ENCODE measurements at regions of chr10 and their contacts with region 1.

Region 1: GRCh38 chr10:125982260-125982948 is 86.0 kb downstream of the FANK1 start:
- DNase-seq: no peak
- H3K4me3 ChIP-seq: no peak overlapping the region
- H3K27ac ChIP-seq: no peak overlapping the region
- H3K4me1 ChIP-seq: no peaks in the 10 kb centered on the region
- H3K27me3 ChIP-seq: no peaks in the 10 kb centered on the region
- CTCF ChIP-seq: peak; percentile 59 to 70 (median 60)

Region 2: DNA sequence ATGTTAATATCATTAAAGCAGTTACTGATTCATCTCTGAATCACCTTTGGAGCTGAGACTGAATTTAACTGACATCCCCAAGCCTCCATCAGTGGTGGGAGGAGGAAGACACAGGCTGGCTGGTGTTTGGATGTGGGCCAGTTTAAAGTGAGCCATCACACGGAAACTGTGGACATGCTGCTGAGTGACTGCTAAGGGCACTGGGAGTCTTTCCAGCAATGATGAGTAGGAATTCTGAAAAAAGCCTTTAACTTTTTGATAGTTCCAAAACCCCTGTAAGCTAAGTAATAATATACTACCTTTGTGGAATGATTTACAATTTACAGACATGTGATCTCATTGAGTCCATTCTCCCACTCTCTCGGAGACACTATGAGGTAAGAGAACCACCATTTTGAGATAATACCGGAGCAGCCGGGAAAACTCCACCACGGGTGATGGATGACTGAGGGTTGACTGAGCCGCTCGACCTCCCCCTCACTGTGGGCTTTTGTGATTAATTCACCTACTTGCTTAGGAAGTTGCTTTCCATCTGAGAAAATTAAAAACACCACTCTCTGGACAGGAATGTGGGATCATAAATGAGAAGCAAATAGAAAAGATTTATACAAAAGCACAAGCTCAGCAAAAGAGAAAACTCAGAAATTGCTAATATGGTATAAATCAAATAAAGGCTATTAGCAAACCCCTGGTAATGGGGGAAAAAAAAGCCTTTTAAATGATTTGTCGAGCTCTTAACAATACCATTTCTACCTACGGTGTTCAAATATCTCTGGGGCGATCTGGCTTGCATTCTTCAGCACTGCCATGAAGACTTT is 108.7 kb after region 1 on chr10:
- intact Hi-C with region 1: loop called (anchors 10 kb)
- DNase-seq: no peak
- H3K4me3 ChIP-seq: no peak overlapping the region
- H3K27ac ChIP-seq: no peak overlapping the region
- H3K4me1 ChIP-seq: no peaks in the 10 kb centered on the region
- H3K27me3 ChIP-seq: no peaks in the 10 kb centered on the region
- CTCF ChIP-seq: no peak

Region 3: GRCh38 chr10:126302826-126303665 is 320.6 kb after region 1 on chr10:
- intact Hi-C with region 1: loop called (anchors 5 kb)
- DNase-seq: no peak
- H3K4me3 ChIP-seq: no peak overlapping the region
- H3K27ac ChIP-seq: no peak overlapping the region
- H3K4me1 ChIP-seq: no peaks in the 10 kb centered on the region
- H3K27me3 ChIP-seq: no peaks in the 10 kb centered on the region
- CTCF ChIP-seq: peak in 2 of 3 experiments; percentile 19 to 25

Region 4: DNA sequence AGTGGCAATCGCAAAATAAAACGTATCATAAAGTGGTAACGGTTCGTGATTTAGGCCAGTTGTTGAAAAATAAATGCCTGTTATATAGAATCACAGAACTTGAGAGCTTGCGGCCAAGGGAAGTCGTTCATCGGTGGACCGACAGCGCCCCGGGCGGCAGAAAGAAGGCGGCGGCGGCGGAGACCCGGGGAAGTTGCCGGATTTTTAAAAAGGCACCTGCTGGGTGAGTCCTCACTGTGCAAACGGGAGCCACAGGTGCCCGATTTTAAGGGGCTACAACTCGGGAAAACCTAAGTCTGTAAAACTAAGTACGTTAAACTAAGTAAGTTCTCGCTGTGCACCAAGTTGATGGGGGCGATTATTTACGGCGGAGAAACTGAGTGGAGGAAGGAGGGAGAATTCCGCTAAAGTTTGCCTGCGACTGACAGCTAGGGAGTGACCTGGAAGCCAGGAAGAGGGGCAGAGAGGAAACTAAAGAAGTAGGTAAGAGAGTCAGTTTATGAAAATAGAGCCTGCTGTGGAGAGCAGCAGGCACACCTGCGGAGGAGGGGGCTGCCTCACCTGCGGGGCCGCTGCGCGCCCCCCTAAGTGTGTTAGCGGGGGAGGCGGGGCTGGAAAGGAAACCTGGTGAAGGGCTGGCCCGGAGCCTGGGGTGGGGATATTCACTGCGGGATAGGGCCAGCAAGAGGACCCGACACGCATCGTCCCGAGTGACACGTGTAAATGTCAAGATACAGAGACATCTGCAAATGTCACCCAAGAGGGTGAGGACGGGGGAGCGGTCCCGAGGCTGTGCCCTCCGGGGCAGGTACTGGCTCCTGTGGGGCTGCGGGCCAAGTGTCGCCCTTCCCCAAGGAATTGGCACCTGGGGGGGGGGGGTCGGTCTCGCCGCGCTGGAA is 404.9 kb after region 1 on chr10:
- intact Hi-C with region 1: loop called (anchors 1 kb)
- DNase-seq: peak in 1 of 2 donors; percentile 72
- H3K4me3 ChIP-seq: peak overlapping the region; percentile 60 to 68
- H3K27ac ChIP-seq: no peak overlapping the region
- H3K4me1 ChIP-seq: peaks cover 0 to 5% of the 10 kb centered on the region in 2 donors
- H3K27me3 ChIP-seq: no peaks in the 10 kb centered on the region
- CTCF ChIP-seq: peak; percentile 45 to 78 (median 71)

Region 5: DNA sequence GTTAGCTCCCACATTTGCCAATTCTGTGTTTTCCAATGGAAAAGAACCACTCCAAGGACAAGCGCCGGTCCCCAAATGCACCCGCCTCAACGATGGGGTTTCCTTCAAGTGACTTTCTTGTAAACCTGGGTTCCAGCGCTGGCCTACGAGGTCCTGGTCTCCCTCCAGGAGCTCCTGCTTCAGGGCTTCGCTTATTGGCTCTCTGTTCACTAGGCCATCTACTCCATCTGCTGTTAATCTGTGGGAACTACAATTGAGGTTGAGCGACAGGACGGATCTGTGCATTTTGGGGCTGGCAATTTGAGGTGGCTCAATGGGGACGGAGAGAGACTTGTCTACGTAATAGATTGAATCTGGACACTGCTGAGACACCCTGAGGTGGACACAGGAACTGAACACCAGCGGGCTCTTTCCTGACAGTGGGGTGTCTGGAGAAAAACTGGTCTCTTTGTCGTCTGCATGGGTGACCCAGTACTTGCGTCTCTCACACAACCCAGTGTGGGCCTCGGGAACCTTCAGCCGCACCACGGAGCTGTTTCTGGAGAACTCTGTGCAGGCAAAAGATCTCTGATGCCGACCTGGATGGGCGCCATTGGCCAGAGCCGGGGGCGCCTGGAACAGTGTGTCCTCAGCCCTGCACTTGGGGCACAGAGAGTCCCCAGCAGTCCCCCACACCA is 521.8 kb after region 1 on chr10:
- intact Hi-C with region 1: loop called (anchors 2 kb)
- DNase-seq: no peak
- H3K4me3 ChIP-seq: no peak overlapping the region
- H3K27ac ChIP-seq: no peak overlapping the region
- H3K4me1 ChIP-seq: no peaks in the 10 kb centered on the region
- H3K27me3 ChIP-seq: no peaks in the 10 kb centered on the region
- CTCF ChIP-seq: peak; percentile 43 to 52 (median 45)

Measured in ascending aorta (tissue), 2 donors.